Heart left ventricle (tissue), 16 donors: ENCODE measurements at regions of chr3 and their contacts with region 1.

Region 1: GRCh38 chr3:115217678-115218451 is 70.8 kb upstream of the ZBTB20 start:
- DNase-seq: peak in 3 of 5 donors; percentile 23 to 36 (median 28)
- ATAC-seq: peak; percentile 65 to 85 (median 74)
- H3K4me3 ChIP-seq: no peak overlapping the region
- H3K27ac ChIP-seq: no peak overlapping the region
- H3K4me1 ChIP-seq: peaks cover 0 to 22% (median 8%) of the 10 kb centered on the region in 12 donors
- H3K27me3 ChIP-seq: no peaks in the 10 kb centered on the region
- CTCF ChIP-seq: peak; percentile 47 to 83 (median 71)
- POLR2A ChIP-seq: no peak

Region 2: GRCh38 chr3:114928989-114929640 is 288.8 kb before region 1 on chr3:
- intact Hi-C with region 1: no loop called
- DNase-seq: no peak
- ATAC-seq: no peak
- H3K4me3 ChIP-seq: no peak overlapping the region
- H3K27ac ChIP-seq: no peak overlapping the region
- H3K4me1 ChIP-seq: peaks cover 0 to 11% (median 2%) of the 10 kb centered on the region in 12 donors
- H3K27me3 ChIP-seq: no peaks in the 10 kb centered on the region
- CTCF ChIP-seq: no peak
- POLR2A ChIP-seq: no peak

Region 3: DNA sequence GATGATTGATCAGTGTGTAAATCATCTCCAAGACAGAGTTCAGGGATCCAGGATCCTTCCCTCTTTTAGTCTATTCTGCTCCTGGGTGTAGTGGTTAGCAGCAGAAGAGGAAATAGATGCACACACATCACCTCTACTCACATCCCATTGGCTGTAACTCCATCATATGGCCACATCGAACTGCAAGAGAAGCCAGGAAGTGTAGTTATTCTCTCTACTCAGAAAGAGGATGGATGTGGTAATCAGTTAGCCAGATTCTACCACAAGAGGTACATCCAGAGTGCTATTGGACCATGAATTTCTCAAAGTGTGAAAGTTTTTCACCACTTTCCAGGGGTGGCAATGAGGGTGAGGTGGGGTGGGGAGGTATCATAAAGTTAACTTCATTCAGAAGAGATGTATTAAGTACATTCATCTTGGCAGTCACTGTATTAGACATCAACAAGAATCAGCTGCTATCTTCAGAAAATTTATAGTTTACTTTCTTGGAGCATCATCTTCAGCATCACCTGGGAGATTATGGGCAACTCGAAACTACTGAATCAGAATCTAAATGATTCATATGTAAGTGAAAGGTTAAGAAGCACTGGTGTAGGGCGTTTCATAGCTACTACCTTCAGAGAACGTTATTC is 344.9 kb after region 1 on chr3:
- intact Hi-C with region 1: loop called in 2 of 10 experiments (anchors 10 kb)
- DNase-seq: no peak
- ATAC-seq: no peak
- H3K4me3 ChIP-seq: no peak overlapping the region
- H3K27ac ChIP-seq: no peak overlapping the region
- H3K4me1 ChIP-seq: no peaks in the 10 kb centered on the region
- H3K27me3 ChIP-seq: no peaks in the 10 kb centered on the region
- CTCF ChIP-seq: no peak
- POLR2A ChIP-seq: no peak

Region 4: GRCh38 chr3:115571413-115571812 is 353.5 kb after region 1 on chr3:
- intact Hi-C with region 1: loop called in 9 of 10 experiments (anchors 5 to 10 kb)
- DNase-seq: no peak
- ATAC-seq: peak in 1 of 4 donors; percentile 51
- H3K4me3 ChIP-seq: no peak overlapping the region
- H3K27ac ChIP-seq: no peak overlapping the region
- H3K4me1 ChIP-seq: no peaks in the 10 kb centered on the region
- H3K27me3 ChIP-seq: no peaks in the 10 kb centered on the region
- CTCF ChIP-seq: peak in 10 of 12 donors; percentile 10 to 44 (median 28)
- POLR2A ChIP-seq: no peak

Region 5: GRCh38 chr3:115644391-115644790 is 426.5 kb after region 1 on chr3:
- intact Hi-C with region 1: no loop called
- DNase-seq: no peak
- ATAC-seq: no peak
- H3K4me3 ChIP-seq: no peak overlapping the region
- H3K27ac ChIP-seq: no peak overlapping the region
- H3K4me1 ChIP-seq: peaks cover 0 to 2% (median 0%) of the 10 kb centered on the region in 12 donors
- H3K27me3 ChIP-seq: no peaks in the 10 kb centered on the region
- CTCF ChIP-seq: no peak
- POLR2A ChIP-seq: no peak

Region 6: GRCh38 chr3:115783938-115784738 is 566.3 kb after region 1 on chr3:
- intact Hi-C with region 1: loop called in 9 of 10 experiments (anchors 1 to 10 kb)
- DNase-seq: peak; percentile 92 to 95 (median 93)
- ATAC-seq: peak; percentile 95 to 97 (median 96)
- H3K4me3 ChIP-seq: peak overlapping the region; percentile 63 to 92 (median 76)
- H3K27ac ChIP-seq: peak overlapping the region; percentile 89 to 99 (median 96)
- H3K4me1 ChIP-seq: peaks cover 0 to 19% (median 13%) of the 10 kb centered on the region in 12 donors
- H3K27me3 ChIP-seq: no peaks in the 10 kb centered on the region
- CTCF ChIP-seq: peak; percentile 92 to 99 (median 98)
- POLR2A ChIP-seq: no peak

Region 7: DNA sequence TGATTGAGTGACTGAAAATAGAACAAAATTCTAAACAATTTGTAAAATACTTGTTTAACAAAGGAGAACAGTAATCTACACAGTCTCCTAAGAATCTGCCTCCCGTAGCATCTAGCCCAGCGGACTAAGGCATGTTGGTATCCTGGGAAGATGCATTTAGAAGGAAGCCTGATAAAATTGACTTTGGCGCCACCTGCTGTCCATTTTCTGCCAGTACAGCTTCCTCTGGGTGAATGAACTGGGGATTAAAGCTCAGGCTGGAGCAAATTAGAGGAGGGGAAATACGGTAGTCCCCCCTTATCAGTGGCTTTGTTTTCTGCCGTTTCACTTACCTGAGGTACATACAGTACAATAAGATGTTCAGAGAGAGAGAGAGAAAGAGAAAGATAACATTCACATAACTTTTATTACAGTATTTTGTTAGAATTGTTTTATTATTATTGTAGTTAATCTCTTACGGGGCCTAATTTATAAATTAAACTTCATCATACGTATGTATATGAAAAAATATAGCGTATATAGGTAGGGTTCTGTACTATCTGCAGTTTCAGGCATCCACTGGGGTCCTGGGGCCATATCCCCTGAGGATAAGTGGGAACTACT is 597.0 kb after region 1 on chr3:
- intact Hi-C with region 1: loop called in 8 of 10 experiments (anchors 5 to 10 kb)
- DNase-seq: peak; percentile 41 to 65 (median 51)
- ATAC-seq: peak; percentile 9 to 84 (median 68)
- H3K4me3 ChIP-seq: no peak overlapping the region
- H3K27ac ChIP-seq: no peak overlapping the region
- H3K4me1 ChIP-seq: no peaks in the 10 kb centered on the region
- H3K27me3 ChIP-seq: peaks cover 0 to 4% (median 0%) of the 10 kb centered on the region in 9 donors
- CTCF ChIP-seq: peak; percentile 82 to 96 (median 92)
- POLR2A ChIP-seq: no peak

Region 8: DNA sequence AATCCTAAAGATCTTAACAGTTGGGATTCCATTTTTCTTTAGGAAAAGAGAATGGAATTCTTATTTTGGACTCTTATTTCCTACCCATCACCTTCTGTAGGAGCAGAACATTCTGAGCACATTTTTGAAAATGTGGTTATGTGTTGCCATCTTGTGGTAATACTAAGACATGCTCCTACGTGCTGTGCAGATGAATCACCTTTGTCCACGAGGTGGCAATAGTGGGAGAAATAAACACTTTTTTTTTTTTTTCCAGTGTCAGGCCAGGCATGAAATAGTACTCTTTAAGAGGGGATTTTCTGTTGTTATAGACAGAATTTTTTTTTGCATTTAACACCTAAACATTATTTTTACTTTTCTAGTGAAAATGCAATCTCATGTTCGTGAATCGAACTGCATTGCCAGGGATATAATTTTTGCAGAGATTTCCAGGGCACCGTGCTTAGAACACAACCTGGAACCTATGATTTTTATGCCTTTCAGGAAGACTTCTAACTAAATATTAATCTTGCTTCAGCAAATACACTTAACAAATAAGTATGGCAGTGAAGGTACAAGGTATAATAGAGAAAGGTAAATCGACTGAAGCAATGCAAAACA is 602.0 kb after region 1 on chr3:
- intact Hi-C with region 1: loop called in 7 of 10 experiments (anchors 10 kb)
- DNase-seq: peak in 4 of 5 donors; percentile 51 to 71 (median 60)
- ATAC-seq: peak in 3 of 4 donors; percentile 77 to 90 (median 81)
- H3K4me3 ChIP-seq: no peak overlapping the region
- H3K27ac ChIP-seq: no peak overlapping the region
- H3K4me1 ChIP-seq: no peaks in the 10 kb centered on the region
- H3K27me3 ChIP-seq: no peaks in the 10 kb centered on the region
- CTCF ChIP-seq: peak; percentile 86 to 100 (median 92)
- POLR2A ChIP-seq: no peak